Calu3 (cell line): ENCODE measurements at regions of chr10 and their contacts with region 1.

Region 1: GRCh38 chr10:97676770-97677581 is 10.1 kb downstream of the AVPI1 start:
- DNase-seq: peak; percentile 49
- H3K4me3 Mint-ChIP-seq: no peak overlapping the region
- H3K27ac Mint-ChIP-seq: no peak overlapping the region
- H3K4me1 Mint-ChIP-seq: no peaks in the 10 kb centered on the region
- H3K27me3 Mint-ChIP-seq: no peaks in the 10 kb centered on the region
- CTCF ChIP-seq: peak; percentile 79

Region 2: DNA sequence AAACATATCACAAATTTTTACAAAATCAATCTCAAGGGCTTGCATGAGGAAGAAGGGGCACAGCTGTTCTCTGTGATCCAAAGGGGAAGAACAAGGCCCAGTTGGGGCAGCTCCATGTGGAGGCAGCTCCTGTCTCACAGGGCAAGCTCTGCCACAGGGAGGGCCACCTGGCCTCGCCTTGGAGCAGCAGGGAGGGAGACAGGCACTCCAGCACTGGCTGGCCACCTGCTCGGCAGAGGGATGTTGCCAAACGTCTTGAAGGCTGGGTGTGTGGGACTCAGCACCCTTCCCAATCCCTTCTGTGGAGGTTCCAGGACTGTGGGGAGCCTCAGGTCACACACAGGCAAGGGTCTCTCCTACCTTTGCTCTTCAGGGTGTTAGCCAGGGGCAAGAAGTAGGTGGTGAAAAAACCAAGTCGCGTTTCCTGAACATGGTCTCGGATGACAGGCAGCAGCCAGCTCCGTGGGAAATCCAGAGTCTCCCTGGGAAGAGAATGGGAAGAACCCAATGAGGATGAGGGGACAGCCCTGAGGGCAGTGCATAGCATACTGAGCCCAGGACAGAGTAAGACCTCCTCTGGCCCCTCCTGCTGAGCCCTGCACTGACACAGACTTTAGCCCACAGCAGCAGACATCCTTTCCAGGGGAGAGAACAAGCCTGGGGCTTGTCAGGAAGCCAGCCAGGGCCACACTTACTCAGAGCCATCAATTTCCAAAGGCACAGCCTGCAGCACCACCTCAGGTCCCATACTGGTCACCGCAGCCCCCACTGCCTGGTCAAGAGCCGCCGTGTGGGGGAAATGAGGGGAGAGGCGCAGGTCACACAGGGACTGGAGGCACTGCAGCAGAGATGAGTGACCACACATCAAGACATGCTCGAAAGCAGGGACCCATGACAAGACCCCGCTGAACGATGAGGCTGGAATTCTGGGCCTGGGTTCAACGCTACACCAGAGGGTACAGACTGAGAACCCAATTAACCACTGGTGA is 297.7 kb before region 1 on chr10:
- CTCF ChIA-PET with region 1: no interaction called
- intact Hi-C with region 1: no loop called
- DNase-seq: no peak
- H3K4me3 Mint-ChIP-seq: no peak overlapping the region
- H3K27ac Mint-ChIP-seq: no peak overlapping the region
- H3K4me1 Mint-ChIP-seq: no peaks in the 10 kb centered on the region
- H3K27me3 Mint-ChIP-seq: no peaks in the 10 kb centered on the region
- CTCF ChIP-seq: no peak

Region 3: GRCh38 chr10:97532935-97533671 is 143.9 kb before region 1 on chr10:
- CTCF ChIA-PET with region 1: no interaction called
- intact Hi-C with region 1: no loop called
- DNase-seq: no peak
- H3K4me3 Mint-ChIP-seq: no peak overlapping the region
- H3K27ac Mint-ChIP-seq: no peak overlapping the region
- H3K4me1 Mint-ChIP-seq: no peaks in the 10 kb centered on the region
- H3K27me3 Mint-ChIP-seq: no peaks in the 10 kb centered on the region
- CTCF ChIP-seq: no peak

Region 4: GRCh38 chr10:97714372-97715258 is 37.6 kb after region 1 on chr10:
- CTCF ChIA-PET with region 1: interaction called, 5 read pairs
- intact Hi-C with region 1: loop called (anchors 5 kb)
- DNase-seq: no peak
- H3K4me3 Mint-ChIP-seq: peak overlapping the region; percentile 76
- H3K27ac Mint-ChIP-seq: peak overlapping the region; percentile 22
- H3K4me1 Mint-ChIP-seq: peaks cover 19% of the 10 kb centered on the region
- H3K27me3 Mint-ChIP-seq: no peaks in the 10 kb centered on the region
- CTCF ChIP-seq: no peak